Left ventricle myocardium superior (tissue), 1 donor: ENCODE measurements at regions of chr7 and their contacts with region 1.

Region 1: GRCh38 chr7:129367700-129368388 is 66.4 kb upstream of the STRIP2 start:
- DNase-seq: peak; percentile 81
- ATAC-seq: peak; percentile 89

Region 2: DNA sequence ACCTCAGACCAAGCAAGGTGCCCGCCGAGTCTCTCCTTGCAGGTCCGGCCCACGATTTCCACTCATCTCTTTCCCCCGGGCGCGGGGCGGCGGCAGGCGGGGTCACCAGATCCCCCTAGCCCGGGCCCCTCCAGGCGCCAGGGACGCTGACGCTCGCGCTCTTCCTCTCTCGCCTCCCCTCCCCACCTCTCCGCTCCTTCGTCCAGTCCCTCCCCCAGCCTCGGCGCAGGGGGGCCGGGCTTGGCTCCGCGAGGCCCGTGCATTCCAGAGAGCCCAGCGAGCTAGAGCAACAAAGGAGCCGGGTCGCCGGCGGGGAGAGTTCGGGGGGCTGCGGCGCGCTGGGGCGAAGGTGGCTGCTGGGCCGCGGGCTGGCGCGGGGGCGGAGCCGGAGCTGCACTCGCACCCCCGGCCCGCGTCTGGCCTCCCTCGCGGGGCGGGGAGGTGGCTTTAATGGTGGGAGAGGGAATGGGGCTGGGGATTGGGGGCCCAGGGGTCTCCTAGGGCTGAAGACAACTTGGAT is 179.4 kb before region 1 on chr7 and contains the start of gene SMO:
- intact Hi-C with region 1: no loop called
- DNase-seq: peak; percentile 68
- ATAC-seq: peak; percentile 91
- total RNA-seq, gene SMO: 5.0 TPM

Region 3: DNA sequence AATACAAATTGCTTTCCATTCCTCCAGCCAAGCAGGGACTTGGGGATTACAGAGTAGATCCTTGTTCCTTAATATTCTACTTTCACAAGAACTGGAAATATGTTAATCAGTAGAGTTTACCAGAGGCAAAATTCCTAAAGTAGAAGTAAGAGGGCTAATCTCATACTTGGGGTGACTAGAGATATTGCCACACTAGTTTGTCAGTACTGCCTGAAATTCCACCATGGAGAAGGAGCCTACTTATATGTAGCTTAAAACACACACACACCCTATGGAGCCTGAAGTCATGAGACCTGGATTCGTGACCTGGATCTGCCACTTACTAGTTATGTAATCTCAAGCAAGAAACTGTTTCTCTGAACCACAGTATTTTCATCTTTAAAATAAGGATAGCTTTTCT is 100.2 kb after region 1 on chr7:
- intact Hi-C with region 1: loop called (anchors 2 kb)
- DNase-seq: no peak
- ATAC-seq: no peak